PC-3 (cell line): ENCODE measurements at regions of chr7 and their contacts with region 1.

Region 1: DNA sequence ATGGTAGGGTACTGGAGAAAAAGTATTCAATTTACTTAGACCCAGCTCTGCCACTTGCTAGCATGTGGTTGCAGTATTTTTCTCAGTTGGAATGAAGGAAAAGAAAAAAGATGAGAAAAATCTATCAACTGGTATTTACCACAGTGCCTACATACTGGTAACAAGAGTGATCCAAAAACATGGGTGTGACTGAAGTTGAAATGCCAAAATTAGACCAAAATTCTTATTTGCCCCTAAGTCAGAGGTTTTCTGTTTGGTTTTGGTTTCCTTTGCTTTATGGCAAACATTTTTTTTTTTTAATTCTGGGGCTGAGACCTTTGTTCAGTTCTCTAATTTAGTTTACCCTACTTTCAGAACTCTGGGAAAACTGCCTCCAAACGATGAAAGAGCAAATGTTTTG is 12.3 kb downstream of the HYCC1 start:
- DNase-seq: no peak
- ATAC-seq: no peak
- H3K4me3 ChIP-seq: no peak overlapping the region
- H3K27ac ChIP-seq: no peak overlapping the region
- H3K4me1 ChIP-seq: peaks cover 11% of the 10 kb centered on the region
- H3K27me3 ChIP-seq: no peaks in the 10 kb centered on the region
- CTCF ChIP-seq: no peak

Region 2: GRCh38 chr7:22949944-22950343 is 51.7 kb before region 1 on chr7:
- CTCF ChIA-PET with region 1: no interaction called
- POLR2A ChIA-PET with region 1: no interaction called
- intact Hi-C with region 1: no loop called
- DNase-seq: no peak
- ATAC-seq: no peak
- H3K4me3 ChIP-seq: no peak overlapping the region
- H3K27ac ChIP-seq: no peak overlapping the region
- H3K4me1 ChIP-seq: no peaks in the 10 kb centered on the region
- H3K27me3 ChIP-seq: no peaks in the 10 kb centered on the region
- CTCF ChIP-seq: no peak

Region 3: DNA sequence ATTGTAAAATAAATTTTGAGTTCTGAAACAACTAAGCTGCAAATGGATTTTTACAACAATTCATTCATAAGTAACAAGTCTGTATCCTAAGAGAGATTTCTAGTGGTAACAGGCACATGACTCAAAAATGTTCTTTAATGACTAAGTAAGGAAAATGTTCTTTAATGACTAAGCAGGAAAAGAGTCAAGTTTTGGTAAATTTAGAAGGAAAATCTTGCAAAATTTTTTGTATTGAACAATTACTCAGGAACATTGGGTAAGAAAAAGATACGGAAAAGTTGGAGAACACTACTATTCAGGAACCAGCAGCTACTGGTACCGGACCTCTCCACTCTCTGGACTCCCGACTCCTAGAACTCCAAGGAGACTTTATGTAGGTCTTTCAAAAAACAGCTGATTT is 21.2 kb before region 1 on chr7:
- CTCF ChIA-PET with region 1: no interaction called
- POLR2A ChIA-PET with region 1: no interaction called
- intact Hi-C with region 1: loop called (anchors 2 kb)
- DNase-seq: peak; percentile 62
- ATAC-seq: peak; percentile 76
- H3K4me3 ChIP-seq: no peak overlapping the region
- H3K27ac ChIP-seq: peak overlapping the region; percentile 78
- H3K4me1 ChIP-seq: peaks cover 36% of the 10 kb centered on the region
- H3K27me3 ChIP-seq: no peaks in the 10 kb centered on the region
- CTCF ChIP-seq: no peak

Region 4: GRCh38 chr7:23404546-23405239 is 403.1 kb after region 1 on chr7:
- CTCF ChIA-PET with region 1: no interaction called
- POLR2A ChIA-PET with region 1: no interaction called
- intact Hi-C with region 1: no loop called
- DNase-seq: no peak
- ATAC-seq: no peak
- H3K4me3 ChIP-seq: no peak overlapping the region
- H3K27ac ChIP-seq: no peak overlapping the region
- H3K4me1 ChIP-seq: no peaks in the 10 kb centered on the region
- H3K27me3 ChIP-seq: no peaks in the 10 kb centered on the region
- CTCF ChIP-seq: no peak